Dendritic cell treated with granulocyte-macrophage colony-stimulating factor and Interleukin-4, amounts not matched to agents 40 ng/mL and 50 ng/mL, for 4 days (primary cell): ENCODE measurements at regions of chr1 and their contacts with region 1.

Region 1: GRCh38 chr1:220983877-220984635 is 104.8 kb downstream of the HLX start:
- H3K4me3 Mint-ChIP-seq: no peak overlapping the region
- H3K27ac Mint-ChIP-seq: no peak overlapping the region
- H3K4me1 Mint-ChIP-seq: peaks cover 17% of the 10 kb centered on the region
- H3K27me3 Mint-ChIP-seq: peaks cover 17% of the 10 kb centered on the region

Region 2: DNA sequence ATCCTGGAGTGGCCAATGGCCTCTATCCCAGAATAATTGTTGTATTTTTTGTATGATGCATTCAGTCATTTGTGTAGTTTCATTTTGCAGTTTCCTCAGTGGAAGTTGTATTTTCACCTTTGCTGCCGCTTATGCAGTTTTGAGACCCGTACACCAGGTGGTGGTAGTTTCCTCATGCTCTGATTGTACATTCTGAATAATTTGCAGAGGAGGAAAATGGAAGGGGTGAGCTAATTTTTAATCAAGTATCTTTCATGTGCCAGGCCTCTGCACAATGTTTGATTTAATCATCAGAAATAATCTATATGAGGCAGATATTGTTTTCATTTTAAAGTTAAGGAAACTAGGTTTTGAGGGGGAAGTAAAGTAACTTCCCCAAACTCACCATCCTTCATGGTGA is 75.3 kb before region 1 on chr1:
- intact Hi-C with region 1: loop called (anchors 10 kb)
- H3K4me3 Mint-ChIP-seq: no peak overlapping the region
- H3K27ac Mint-ChIP-seq: no peak overlapping the region
- H3K4me1 Mint-ChIP-seq: peaks cover 10% of the 10 kb centered on the region
- H3K27me3 Mint-ChIP-seq: peaks cover 48% of the 10 kb centered on the region